ENCODE measurements at regions of chr7 and their contacts with region 1.

Region 1: DNA sequence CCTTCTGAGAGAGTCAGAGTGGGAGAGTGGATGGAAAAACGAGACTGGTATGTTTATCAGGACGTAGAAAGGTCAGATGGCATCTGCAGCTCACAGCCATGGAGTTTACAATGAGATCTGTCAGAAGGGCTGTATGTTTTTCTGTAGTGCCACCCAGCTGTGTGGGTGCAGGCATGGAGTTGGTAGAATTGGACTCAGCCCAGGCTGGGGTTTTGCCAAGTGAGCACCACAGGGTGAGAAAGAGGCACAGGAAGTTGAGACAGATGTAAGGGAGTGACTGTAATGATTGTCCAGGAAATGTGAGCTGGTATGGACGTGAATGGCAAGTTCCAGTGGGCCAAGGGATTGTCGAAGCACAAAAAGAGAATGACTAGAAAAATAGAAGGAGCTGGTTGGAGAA is 9.1 kb upstream of the ZYX start:
- DNase-seq: no peak
- H3K4me3 Mint-ChIP-seq: no peak overlapping the region
- H3K27ac Mint-ChIP-seq: no peak overlapping the region
- H3K4me1 Mint-ChIP-seq: peaks cover 46% of the 10 kb centered on the region
- H3K27me3 Mint-ChIP-seq: peaks cover 6% of the 10 kb centered on the region

Region 2: DNA sequence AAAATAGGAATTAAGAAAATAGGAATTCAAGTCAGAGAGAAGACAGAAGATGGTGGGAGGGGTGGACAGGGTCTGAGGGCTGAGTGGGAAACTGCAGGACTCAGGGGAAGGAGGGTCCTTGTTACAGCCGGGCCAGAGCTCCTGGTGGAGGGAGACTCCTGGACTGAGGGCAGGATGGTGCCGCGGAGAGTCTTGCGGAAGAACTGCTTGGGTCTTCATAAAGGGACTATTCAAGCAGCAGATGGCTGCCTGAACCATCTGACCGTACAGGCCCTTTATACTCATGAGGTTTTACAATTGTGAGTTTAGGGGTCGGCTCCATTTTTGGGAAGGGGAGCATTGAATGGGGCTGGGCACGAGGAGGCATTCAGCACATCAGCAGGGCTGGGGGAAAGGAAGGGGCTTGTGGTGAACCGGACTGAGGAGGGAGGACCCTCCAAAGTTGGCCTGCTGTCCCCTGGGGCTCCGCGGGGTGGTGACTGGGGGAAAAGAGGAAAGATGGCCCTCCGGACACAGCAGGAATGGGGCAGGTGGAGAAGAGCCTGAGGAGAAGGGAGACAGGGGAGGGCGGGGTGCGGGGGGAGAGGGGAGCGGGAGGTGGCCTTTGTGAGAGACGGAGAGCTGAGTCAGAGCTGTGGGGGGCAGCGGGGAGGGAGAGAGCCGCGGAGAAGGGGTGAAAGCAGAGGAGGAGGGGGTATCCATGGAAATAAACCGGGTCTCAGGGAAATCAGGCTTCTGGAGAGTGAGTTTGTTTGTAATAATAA is 11.1 kb before region 1 on chr7:
- CTCF ChIA-PET with region 1: interaction called, 11 read pairs
- POLR2A ChIA-PET with region 1: interaction called, 3 read pairs
- DNase-seq: no peak
- H3K4me3 Mint-ChIP-seq: peak overlapping the region; percentile 44
- H3K27ac Mint-ChIP-seq: no peak overlapping the region
- H3K4me1 Mint-ChIP-seq: peaks cover 8% of the 10 kb centered on the region
- H3K27me3 Mint-ChIP-seq: peaks cover 62% of the 10 kb centered on the region

Region 3: DNA sequence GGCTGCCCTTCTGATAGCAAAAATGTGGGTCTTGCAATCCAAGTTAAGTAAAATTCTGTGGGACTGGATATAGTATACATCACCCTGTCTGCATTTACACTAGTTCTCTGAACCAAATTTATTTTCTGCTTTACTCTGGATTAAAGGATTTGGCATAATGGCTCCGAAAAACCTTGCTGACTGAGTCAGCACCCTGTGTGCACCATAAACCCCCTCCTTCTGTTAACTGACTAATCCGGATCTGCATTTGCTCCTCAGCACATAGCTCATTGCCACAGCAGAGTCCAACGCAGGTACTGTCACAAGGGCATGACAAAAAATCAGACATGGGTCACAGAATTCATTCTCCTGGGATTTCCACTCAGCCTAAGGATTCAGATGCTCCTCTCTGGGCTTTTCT is 678.0 kb after region 1 on chr7:
- CTCF ChIA-PET with region 1: no interaction called
- POLR2A ChIA-PET with region 1: no interaction called
- DNase-seq: no peak
- H3K4me3 Mint-ChIP-seq: no peak overlapping the region
- H3K27ac Mint-ChIP-seq: no peak overlapping the region
- H3K4me1 Mint-ChIP-seq: no peaks in the 10 kb centered on the region
- H3K27me3 Mint-ChIP-seq: peaks cover 11% of the 10 kb centered on the region

Measured in activated CD4-positive, alpha-beta T cell treated with anti-CD3 and anti-CD28 coated beads, Interleukin-2, amount 10 ng/mL, durations not matched to agents 7 days and 5 days (primary cell).